Activated CD4-positive, alpha-beta memory T cell treated with anti-CD3 and anti-CD28 coated beads for 36 hours (primary cell): ENCODE measurements at regions of chr2 and their contacts with region 1.

Region 1: GRCh38 chr2:147331790-147332419 is 512.9 kb upstream of the ACVR2A start:
- DNase-seq: peak; percentile 49
- H3K4me3 Mint-ChIP-seq: no peak overlapping the region
- H3K27ac Mint-ChIP-seq: no peak overlapping the region
- H3K4me1 Mint-ChIP-seq: peaks cover 19% of the 10 kb centered on the region
- H3K27me3 Mint-ChIP-seq: no peaks in the 10 kb centered on the region

Region 2: GRCh38 chr2:147045113-147045512 is 286.8 kb before region 1 on chr2:
- CTCF ChIA-PET with region 1: interaction called, 53 read pairs
- POLR2A ChIA-PET with region 1: no interaction called
- intact Hi-C with region 1: loop called (anchors 1 kb)
- DNase-seq: peak; percentile 67
- H3K4me3 Mint-ChIP-seq: no peak overlapping the region
- H3K27ac Mint-ChIP-seq: no peak overlapping the region
- H3K4me1 Mint-ChIP-seq: peaks cover 3% of the 10 kb centered on the region
- H3K27me3 Mint-ChIP-seq: no peaks in the 10 kb centered on the region

Region 3: GRCh38 chr2:147182260-147182659 is 149.6 kb before region 1 on chr2:
- CTCF ChIA-PET with region 1: interaction called, 4 read pairs
- POLR2A ChIA-PET with region 1: no interaction called
- intact Hi-C with region 1: loop called (anchors 1 kb)
- DNase-seq: peak; percentile 82
- H3K4me3 Mint-ChIP-seq: no peak overlapping the region
- H3K27ac Mint-ChIP-seq: peak overlapping the region; percentile 77
- H3K4me1 Mint-ChIP-seq: peaks cover 29% of the 10 kb centered on the region
- H3K27me3 Mint-ChIP-seq: no peaks in the 10 kb centered on the region

Region 4: DNA sequence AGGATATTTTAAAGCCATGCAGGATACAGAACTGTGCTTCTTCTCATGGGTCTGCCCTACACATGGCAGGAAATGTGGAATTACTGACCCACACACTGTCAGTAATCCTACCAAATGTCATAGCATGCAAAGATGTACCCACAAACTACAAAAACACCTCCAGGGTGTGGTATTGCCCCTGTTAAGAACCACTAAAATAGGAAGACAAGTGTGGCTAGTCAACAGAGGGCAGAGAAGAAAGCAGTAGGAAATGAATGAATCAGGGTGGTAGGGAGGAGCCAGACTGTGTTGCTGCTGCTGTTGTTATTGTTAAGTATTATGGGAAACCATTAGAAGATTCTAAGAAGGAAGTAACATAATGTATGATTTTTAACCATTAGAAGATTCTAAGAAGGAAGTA is 43.8 kb before region 1 on chr2:
- CTCF ChIA-PET with region 1: interaction called, 10 read pairs
- POLR2A ChIA-PET with region 1: no interaction called
- intact Hi-C with region 1: loop called (anchors 1 kb)
- DNase-seq: peak; percentile 41
- H3K4me3 Mint-ChIP-seq: no peak overlapping the region
- H3K27ac Mint-ChIP-seq: peak overlapping the region; percentile 59
- H3K4me1 Mint-ChIP-seq: peaks cover 45% of the 10 kb centered on the region
- H3K27me3 Mint-ChIP-seq: no peaks in the 10 kb centered on the region

Region 5: GRCh38 chr2:147398301-147398700 is 66.4 kb after region 1 on chr2:
- CTCF ChIA-PET with region 1: no interaction called
- POLR2A ChIA-PET with region 1: no interaction called
- intact Hi-C with region 1: no loop called
- DNase-seq: no peak
- H3K4me3 Mint-ChIP-seq: no peak overlapping the region
- H3K27ac Mint-ChIP-seq: no peak overlapping the region
- H3K4me1 Mint-ChIP-seq: no peaks in the 10 kb centered on the region
- H3K27me3 Mint-ChIP-seq: peaks cover 2% of the 10 kb centered on the region

Region 6: GRCh38 chr2:147543056-147543455 is 211.2 kb after region 1 on chr2:
- CTCF ChIA-PET with region 1: no interaction called
- POLR2A ChIA-PET with region 1: no interaction called
- intact Hi-C with region 1: no loop called
- DNase-seq: no peak
- H3K4me3 Mint-ChIP-seq: no peak overlapping the region
- H3K27ac Mint-ChIP-seq: no peak overlapping the region
- H3K4me1 Mint-ChIP-seq: peaks cover 3% of the 10 kb centered on the region
- H3K27me3 Mint-ChIP-seq: no peaks in the 10 kb centered on the region

Region 7: GRCh38 chr2:148244587-148245292 is 912.8 kb after region 1 on chr2:
- CTCF ChIA-PET with region 1: no interaction called
- POLR2A ChIA-PET with region 1: no interaction called
- intact Hi-C with region 1: no loop called
- DNase-seq: no peak
- H3K4me3 Mint-ChIP-seq: no peak overlapping the region
- H3K27ac Mint-ChIP-seq: no peak overlapping the region
- H3K4me1 Mint-ChIP-seq: no peaks in the 10 kb centered on the region
- H3K27me3 Mint-ChIP-seq: no peaks in the 10 kb centered on the region